CD14-positive monocyte (primary cell): ENCODE measurements at regions of chr13 and their contacts with region 1.

Region 1: DNA sequence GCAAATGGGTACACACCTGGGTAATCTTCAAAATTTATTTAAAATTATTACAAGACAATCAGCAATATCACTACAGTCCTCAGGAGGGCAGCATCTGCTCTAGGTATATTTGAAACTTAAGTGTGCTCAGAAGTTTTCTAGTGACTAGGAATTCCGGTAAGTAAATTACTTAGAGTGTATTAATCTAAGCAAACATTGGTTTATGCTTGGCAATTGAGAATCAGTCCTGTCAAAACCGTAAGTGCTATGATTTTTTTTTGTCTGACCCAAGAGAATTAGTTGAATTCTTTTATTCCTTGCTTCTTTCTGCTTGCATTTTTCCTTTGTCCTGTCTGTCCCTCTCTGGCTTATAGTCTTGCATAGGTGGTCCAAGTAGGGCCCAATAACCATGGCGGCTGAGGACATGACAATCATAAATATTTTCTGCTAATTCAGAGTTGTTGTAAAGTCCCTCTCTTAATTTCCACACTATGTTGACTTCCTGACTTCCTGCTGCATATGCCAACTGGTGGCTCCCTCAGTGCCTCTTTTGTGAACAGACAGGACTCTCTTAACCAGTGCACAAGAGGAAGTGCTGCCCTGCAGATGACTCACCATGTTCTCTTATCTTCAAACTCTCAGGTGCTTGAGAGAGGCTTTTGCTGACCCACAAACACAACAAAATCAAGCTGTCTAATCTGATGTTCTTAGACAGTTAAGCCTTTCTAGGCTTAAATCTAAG is 82.2 kb downstream of the SLAIN1 start:
- DNase-seq: peak; percentile 63 to 83 (median 78)
- H3K4me3 ChIP-seq: peak overlapping the region in 2 of 3 experiments; percentile 10 to 49
- H3K4me3 Mint-ChIP-seq: peak overlapping the region; percentile 55 to 87
- H3K27ac ChIP-seq: peak overlapping the region in 1 of 2 donors; percentile 38
- H3K27ac Mint-ChIP-seq: peak overlapping the region; percentile 20 to 87 (median 69)
- H3K4me1 ChIP-seq: peaks cover 5 to 9% of the 10 kb centered on the region in 2 donors
- H3K4me1 Mint-ChIP-seq: peaks cover 10% of the 10 kb centered on the region
- H3K27me3 ChIP-seq: no peaks in the 10 kb centered on the region
- H3K27me3 Mint-ChIP-seq: no peaks in the 10 kb centered on the region
- CTCF ChIP-seq: peak; percentile 90

Region 2: GRCh38 chr13:78121459-78122348 is 342.0 kb after region 1 on chr13:
- intact Hi-C with region 1: loop called (anchors 2 to 5 kb)
- DNase-seq: peak; percentile 48 to 69 (median 53)
- H3K4me3 ChIP-seq: peak overlapping the region in 1 of 3 experiments; percentile 16
- H3K4me3 Mint-ChIP-seq: no peak overlapping the region
- H3K27ac ChIP-seq: no peak overlapping the region
- H3K27ac Mint-ChIP-seq: peak overlapping the region in 1 of 7 donors; percentile 9
- H3K4me1 ChIP-seq: peaks cover 10 to 13% of the 10 kb centered on the region in 2 donors
- H3K4me1 Mint-ChIP-seq: peaks cover 9% of the 10 kb centered on the region
- H3K27me3 ChIP-seq: no peaks in the 10 kb centered on the region
- H3K27me3 Mint-ChIP-seq: peaks cover 0 to 2% (median 0%) of the 10 kb centered on the region in 3 donors
- CTCF ChIP-seq: peak; percentile 96